ENCODE measurements at regions of chr4 and their contacts with region 1.

Region 1: DNA sequence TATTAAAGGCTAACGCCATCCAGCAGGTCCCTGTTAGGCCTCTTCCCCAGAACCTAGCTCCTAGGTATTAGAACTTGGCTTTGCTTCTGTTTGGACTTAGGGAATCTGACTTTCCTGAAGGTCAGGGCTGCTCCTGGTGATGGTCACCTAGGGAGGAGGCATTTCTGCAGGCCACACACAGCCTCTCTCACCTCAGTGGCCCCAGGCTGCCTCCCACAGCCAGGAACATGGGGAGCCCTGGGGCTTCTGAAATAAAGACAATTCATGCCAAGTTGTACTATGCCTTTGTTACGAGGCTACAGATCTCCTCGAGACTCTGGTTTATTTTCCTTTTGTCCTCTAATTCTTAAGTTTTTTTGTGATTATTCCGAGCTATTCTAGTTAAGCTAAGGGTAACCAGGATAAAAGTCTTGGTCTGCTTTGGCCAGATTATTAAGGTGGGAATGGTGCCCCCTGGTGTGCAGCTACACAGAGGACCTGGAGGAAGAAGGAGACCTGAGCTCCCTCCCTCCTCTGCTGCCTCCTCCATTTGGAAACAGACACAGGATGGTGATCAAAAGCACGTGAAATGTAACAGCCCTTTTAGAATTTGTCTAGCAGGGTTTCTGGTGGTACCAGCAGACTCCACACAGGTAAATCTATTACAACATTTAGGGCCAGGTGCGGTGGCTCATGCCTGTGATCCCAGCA is 131.0 kb downstream of the DCLK2 start:
- H3K4me3 Mint-ChIP-seq: no peak overlapping the region
- H3K27ac Mint-ChIP-seq: no peak overlapping the region
- H3K4me1 Mint-ChIP-seq: no peaks in the 10 kb centered on the region
- H3K27me3 Mint-ChIP-seq: no peaks in the 10 kb centered on the region

Region 2: GRCh38 chr4:149999485-150000074 is 209.7 kb before region 1 on chr4:
- intact Hi-C with region 1: loop called (anchors 1 kb)
- H3K4me3 Mint-ChIP-seq: no peak overlapping the region
- H3K27ac Mint-ChIP-seq: no peak overlapping the region
- H3K4me1 Mint-ChIP-seq: no peaks in the 10 kb centered on the region
- H3K27me3 Mint-ChIP-seq: peaks cover 2% of the 10 kb centered on the region

Region 3: GRCh38 chr4:150010525-150011126 is 198.7 kb before region 1 on chr4:
- intact Hi-C with region 1: loop called (anchors 2 kb)
- H3K4me3 Mint-ChIP-seq: no peak overlapping the region
- H3K27ac Mint-ChIP-seq: no peak overlapping the region
- H3K4me1 Mint-ChIP-seq: peaks cover under 1% of the 10 kb centered on the region
- H3K27me3 Mint-ChIP-seq: peaks cover 7% of the 10 kb centered on the region